Ascending aorta (tissue), 2 donors: ENCODE measurements at regions of chr1 and their contacts with region 1.

Region 1: DNA sequence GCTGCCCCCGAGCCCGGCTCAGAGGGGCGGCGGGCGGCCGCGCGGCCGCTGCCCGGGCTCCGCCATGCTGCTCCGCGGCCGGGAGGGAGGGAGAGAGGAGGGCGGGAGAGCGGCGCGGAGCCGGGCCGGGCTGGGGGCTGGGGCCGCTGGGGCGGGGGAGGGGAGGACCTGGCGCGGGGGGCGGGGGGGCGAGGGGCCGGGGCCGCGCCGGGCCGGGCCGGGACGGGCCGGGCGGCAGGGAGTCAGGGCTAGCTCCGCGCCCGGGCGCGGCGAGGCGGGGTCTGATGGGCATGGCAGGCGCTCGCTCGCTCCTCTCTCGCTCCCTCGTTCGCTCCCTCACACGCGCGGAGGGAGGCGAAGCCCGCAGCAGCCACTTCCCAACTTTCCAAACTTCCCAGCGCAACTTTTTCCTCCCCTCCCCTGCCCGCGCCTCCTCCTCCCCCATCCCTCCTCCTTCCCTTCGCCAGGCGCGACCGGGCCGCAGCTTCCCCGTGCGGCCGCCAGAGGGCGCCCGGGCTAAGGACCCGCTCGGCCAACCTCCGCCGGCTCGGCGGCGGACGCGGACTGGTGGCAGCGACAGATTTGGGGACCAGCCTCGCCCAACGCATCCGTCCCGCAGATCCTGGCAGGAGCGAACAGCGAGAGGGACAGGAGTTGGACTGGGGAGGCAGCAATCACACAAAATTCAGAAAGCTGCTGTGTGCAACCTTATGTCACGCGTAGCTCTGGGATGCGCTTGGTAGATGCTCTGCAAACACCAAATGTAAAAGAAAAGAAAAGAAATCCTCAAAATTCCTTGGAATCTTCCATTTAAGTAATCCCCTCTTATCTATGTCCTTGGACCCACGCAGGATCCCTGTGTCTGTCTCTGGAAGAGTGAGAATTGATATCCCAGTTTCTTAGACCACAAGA is at the start of gene TRABD2B:
- DNase-seq: peak; percentile 27 to 94
- H3K4me3 ChIP-seq: peak within 1 kb of the TSS; percentile 74 to 96
- H3K27ac ChIP-seq: peak within 1 kb of the TSS; percentile 87 to 90
- H3K4me1 ChIP-seq: peaks cover 0 to 18% of the 10 kb centered on the region in 2 donors
- H3K27me3 ChIP-seq: no peaks in the 10 kb centered on the region
- CTCF ChIP-seq: peak; percentile 92 to 99 (median 99)
- total RNA-seq, gene TRABD2B: 7.9 TPM

Region 2: GRCh38 chr1:47738560-47739182 is 258.9 kb before region 1 on chr1:
- intact Hi-C with region 1: loop called (anchors 2 kb)
- DNase-seq: peak in 1 of 2 donors; percentile 71
- H3K4me3 ChIP-seq: no peak overlapping the region
- H3K27ac ChIP-seq: no peak overlapping the region
- H3K4me1 ChIP-seq: no peaks in the 10 kb centered on the region
- H3K27me3 ChIP-seq: no peaks in the 10 kb centered on the region
- CTCF ChIP-seq: peak; percentile 65 to 84 (median 76)

Region 3: GRCh38 chr1:47797575-47797974 is 200.0 kb before region 1 on chr1:
- intact Hi-C with region 1: no loop called
- DNase-seq: no peak
- H3K4me3 ChIP-seq: no peak overlapping the region
- H3K27ac ChIP-seq: no peak overlapping the region
- H3K4me1 ChIP-seq: peaks cover 0 to 5% of the 10 kb centered on the region in 2 donors
- H3K27me3 ChIP-seq: no peaks in the 10 kb centered on the region
- CTCF ChIP-seq: no peak

Region 4: DNA sequence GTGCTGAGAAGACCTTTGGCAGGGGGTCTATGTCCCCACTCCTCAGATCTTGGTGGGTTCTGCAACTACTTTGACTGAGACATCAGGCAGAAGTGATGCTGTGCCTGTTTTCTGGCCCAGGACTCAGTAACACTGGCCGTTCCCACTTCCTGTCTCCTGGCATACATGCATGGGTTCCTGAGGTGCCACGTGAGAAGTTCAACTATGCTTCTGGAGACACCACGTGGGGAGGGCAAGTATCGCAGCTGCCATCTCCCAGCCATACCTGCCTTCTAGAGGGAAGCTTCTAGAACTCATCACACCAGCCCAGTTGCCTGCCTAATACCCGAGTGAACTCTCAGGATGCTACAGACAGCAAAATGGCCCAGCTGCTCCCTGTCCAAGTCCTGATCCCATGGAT is 66.2 kb before region 1 on chr1:
- intact Hi-C with region 1: no loop called
- DNase-seq: no peak
- H3K4me3 ChIP-seq: no peak overlapping the region
- H3K27ac ChIP-seq: no peak overlapping the region
- H3K4me1 ChIP-seq: peaks cover 0 to 24% of the 10 kb centered on the region in 2 donors
- H3K27me3 ChIP-seq: no peaks in the 10 kb centered on the region
- CTCF ChIP-seq: peak in 2 of 3 experiments; percentile 8 to 21

Region 5: GRCh38 chr1:47967864-47968556 is 29.5 kb before region 1 on chr1:
- intact Hi-C with region 1: loop called (anchors 2 kb)
- DNase-seq: no peak
- H3K4me3 ChIP-seq: no peak overlapping the region
- H3K27ac ChIP-seq: peak overlapping the region in 1 of 2 donors; percentile 20
- H3K4me1 ChIP-seq: peaks cover 3 to 26% of the 10 kb centered on the region in 2 donors
- H3K27me3 ChIP-seq: no peaks in the 10 kb centered on the region
- CTCF ChIP-seq: no peak

Region 6: DNA sequence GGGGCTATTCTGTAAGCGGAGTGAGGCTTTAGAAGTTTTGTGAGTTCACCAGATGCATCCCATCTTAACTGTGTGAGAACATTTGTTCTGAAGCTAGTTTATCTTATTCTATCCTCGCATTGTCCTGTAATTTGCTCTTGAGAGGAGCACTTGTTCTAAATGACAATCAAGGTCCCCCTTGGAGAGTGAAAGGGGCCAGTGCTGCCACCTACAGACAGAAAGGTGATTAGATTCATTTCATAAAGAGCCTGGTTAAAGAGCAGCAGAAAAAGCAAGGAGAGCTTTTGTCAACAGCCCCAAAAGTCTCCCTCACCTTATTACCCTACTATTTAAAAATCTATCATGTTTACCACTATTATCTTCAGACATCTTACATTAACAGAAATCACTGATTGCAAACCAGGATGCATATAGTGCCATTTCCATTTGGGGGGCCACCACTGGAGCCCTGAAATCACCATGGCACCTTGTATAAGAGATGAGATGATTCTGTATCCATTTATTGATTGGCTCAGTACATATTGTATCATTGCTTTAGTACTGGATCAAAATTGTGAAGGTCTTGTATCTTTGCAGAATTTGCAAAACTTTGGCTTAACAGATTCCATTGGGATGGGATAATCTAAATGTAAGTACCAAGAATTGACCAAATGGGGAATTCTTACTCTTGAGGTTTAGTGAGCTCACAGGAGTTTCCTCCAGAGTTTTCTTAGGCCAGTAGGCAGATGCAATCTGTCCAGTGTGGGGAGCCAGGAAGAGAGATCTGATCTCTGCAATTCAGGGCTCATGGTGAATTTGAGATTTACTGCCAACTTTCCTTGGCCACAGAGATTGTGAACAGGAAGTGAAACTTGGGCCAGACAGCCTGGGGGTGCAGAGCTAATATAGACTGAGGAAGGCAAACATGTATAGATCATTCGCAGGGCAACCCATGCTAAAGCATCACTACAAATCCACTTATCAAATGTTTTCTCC is 63.9 kb after region 1 on chr1:
- intact Hi-C with region 1: loop called (anchors 1 kb)
- DNase-seq: peak in 1 of 2 donors; percentile 84
- H3K4me3 ChIP-seq: no peak overlapping the region
- H3K27ac ChIP-seq: no peak overlapping the region
- H3K4me1 ChIP-seq: peaks cover 0 to 6% of the 10 kb centered on the region in 2 donors
- H3K27me3 ChIP-seq: no peaks in the 10 kb centered on the region
- CTCF ChIP-seq: peak; percentile 53 to 81 (median 67)

Region 7: DNA sequence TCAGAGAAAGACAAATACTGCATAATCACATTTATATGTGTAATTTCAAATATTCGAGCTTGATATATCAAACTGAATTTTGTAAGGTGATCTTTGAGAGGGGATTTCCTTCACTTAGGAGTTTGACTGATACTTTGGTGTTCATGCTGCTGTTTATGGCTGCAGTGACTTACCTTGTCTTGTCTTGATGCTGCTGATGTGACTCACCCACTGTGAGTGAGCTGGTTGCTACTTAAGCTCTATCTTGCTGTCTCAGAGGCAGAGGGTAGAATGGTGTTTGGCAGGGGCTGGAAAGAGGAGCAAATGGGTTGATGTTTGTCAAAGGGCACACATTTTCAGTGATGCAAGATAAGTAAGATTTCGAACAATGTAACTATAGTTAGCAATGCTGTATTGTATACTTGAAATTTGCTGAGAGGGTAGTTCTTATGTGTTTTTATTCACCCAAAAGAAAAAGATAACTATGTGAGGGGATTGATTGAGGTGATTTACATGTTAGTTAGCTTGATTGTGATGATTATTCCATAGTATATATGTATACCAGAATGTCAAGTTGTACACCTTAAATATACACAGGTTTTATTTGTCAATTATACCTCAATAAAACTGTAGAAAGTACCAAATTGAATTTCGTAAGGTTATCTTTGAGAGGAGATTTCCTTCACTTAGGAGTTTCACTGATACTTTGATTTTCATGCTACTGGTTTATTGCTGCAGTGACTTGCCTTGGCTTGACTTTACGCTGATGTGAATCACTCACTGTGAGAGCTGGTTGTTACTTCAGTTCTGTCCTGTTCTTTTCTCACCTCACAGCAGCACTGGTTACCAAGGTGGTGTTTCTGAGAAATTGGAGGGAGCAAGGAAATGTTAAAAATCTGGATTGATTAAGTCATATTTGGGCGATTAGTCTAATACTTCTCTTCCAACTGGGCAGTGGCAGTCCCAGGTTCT is 130.5 kb after region 1 on chr1:
- intact Hi-C with region 1: no loop called
- DNase-seq: no peak
- H3K4me3 ChIP-seq: no peak overlapping the region
- H3K27ac ChIP-seq: no peak overlapping the region
- H3K4me1 ChIP-seq: no peaks in the 10 kb centered on the region
- H3K27me3 ChIP-seq: no peaks in the 10 kb centered on the region
- CTCF ChIP-seq: no peak

Region 8: DNA sequence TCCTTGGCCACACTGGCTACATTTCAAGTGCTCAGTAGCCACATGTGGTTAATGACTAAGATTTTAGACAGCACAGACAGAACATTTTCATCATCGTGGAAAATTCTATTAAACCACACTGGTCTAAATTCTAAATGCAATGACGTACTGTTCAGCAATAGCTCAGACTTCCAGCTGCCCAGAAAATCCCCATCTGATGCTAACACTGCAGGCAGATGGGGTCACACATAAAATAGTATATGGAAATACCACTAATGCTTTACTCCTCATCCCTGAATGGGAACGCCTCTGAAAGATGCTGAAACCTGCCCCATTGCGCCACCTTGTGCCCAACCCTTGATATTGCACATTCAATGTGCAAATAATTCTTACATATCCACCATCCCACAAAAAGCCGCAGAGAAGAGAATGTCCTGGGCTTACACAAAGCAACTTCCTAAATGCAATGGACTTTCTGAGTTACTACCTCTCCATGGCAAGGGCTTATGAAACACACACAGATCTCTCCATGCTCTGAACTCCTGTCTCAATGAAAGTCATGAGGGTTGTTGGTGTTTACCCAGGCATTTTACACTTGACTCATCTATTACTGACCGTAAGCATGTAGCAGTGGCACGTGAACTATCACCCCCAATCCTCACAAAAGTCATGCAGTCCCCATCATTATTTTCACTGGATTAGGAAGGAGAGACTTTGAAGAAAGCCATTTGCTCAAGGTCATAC is 204.6 kb after region 1 on chr1:
- intact Hi-C with region 1: loop called (anchors 5 kb)
- DNase-seq: peak in 1 of 2 donors; percentile 78
- H3K4me3 ChIP-seq: no peak overlapping the region
- H3K27ac ChIP-seq: no peak overlapping the region
- H3K4me1 ChIP-seq: peaks cover 0 to 7% of the 10 kb centered on the region in 2 donors
- H3K27me3 ChIP-seq: no peaks in the 10 kb centered on the region
- CTCF ChIP-seq: peak; percentile 66 to 82 (median 76)